ENCODE measurements at regions of chr5 and their contacts with region 1.

Region 1: GRCh38 chr5:142363619-142363963 is 38.8 kb upstream of the SPRY4 start:
- DNase-seq: no peak
- H3K4me3 ChIP-seq: no peak overlapping the region
- H3K27me3 ChIP-seq: no peaks in the 10 kb centered on the region
- CTCF ChIP-seq: no peak

Region 2: DNA sequence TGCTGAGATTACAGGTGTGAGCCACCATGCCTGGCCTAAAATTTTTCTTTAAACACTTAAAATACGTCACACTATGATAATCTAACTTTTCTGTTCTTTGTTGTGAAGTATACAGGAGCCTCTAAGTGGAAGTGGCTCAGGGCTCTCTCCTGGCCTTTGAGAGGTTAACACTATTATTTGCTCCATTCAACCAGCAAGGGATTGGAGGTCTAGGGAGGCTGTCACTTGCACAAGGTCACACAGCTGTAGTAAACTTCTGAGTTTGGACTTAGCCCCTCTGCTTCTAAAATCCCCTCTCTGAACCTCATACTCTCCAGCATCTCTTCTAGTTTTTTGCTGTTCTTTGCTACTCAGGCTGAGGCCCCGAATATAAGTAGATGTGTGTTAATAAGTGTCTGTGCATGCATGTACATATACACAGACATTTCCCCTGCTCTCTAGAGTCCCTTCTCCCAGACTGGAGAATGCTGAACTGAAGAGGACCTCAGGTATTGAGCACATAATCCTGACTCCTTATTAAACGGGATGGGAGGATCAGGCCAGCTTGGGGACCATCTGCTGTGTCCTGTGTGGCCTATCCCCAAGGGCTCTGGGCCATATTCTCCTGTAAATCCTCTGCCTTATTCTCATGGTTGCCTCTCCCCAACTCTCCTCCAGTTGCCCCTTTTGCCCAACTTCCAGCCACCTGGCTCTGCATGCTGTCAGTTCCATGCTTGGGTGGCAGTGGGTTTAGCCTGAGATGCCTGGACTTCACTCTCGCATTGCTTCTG is 48.2 kb after region 1 on chr5:
- CTCF ChIA-PET with region 1: no interaction called
- POLR2A ChIA-PET with region 1: interaction called, 14 read pairs
- DNase-seq: no peak
- H3K4me3 ChIP-seq: no peak overlapping the region
- H3K27me3 ChIP-seq: no peaks in the 10 kb centered on the region
- CTCF ChIP-seq: no peak

Measured in BJ (cell line).